CD8-positive, alpha-beta T cell (primary cell): ENCODE measurements at regions of chr5 and their contacts with region 1.

Region 1: DNA sequence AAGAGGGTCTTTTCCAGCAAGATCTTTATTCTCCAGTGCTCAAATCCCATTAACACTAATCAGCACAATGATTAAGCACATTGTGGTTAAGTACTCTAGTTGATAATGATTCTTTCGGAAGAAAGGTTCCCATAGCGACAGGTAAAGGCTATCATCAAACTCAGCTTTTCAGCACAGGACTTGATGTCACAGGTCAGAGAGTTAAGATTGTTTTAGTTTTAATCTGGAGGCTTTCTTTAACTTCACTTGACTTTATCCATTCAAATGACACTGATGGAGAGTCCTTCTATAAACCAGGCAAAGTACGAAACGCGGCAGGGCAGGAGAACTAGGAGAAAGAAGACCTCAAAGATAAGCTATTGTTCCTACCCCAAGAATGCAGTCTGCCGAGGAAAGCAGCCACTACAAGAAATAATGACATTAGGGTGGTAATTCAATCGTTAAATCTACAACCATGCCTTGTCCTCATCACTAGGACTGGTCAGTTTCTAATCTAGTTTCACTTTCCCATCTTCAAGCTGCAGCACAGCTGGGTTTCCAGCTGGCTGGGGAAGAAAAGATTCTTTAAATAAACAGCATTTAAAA is 4.6 kb downstream of the NRG2 start:
- DNase-seq: no peak
- ATAC-seq: no peak
- H3K4me3 ChIP-seq: no peak overlapping the region
- H3K4me3 Mint-ChIP-seq: peak overlapping the region; percentile 13
- H3K27ac ChIP-seq: no peak overlapping the region
- H3K27ac Mint-ChIP-seq: no peak overlapping the region
- H3K4me1 ChIP-seq: peaks cover 10% of the 10 kb centered on the region
- H3K4me1 Mint-ChIP-seq: peaks cover 16% of the 10 kb centered on the region
- H3K27me3 ChIP-seq: peaks cover 8 to 13% of the 10 kb centered on the region in 2 experiments
- H3K27me3 Mint-ChIP-seq: peaks cover 60% of the 10 kb centered on the region
- CTCF ChIP-seq: no peak

Region 2: GRCh38 chr5:138472353-138472752 is 1566.1 kb before region 1 on chr5:
- CTCF ChIA-PET with region 1: no interaction called
- POLR2A ChIA-PET with region 1: no interaction called
- intact Hi-C with region 1: loop called in 1 of 2 experiments (anchors 5 kb)
- DNase-seq: no peak
- ATAC-seq: no peak
- H3K4me3 ChIP-seq: no peak overlapping the region
- H3K4me3 Mint-ChIP-seq: no peak overlapping the region
- H3K27ac ChIP-seq: no peak overlapping the region
- H3K27ac Mint-ChIP-seq: no peak overlapping the region
- H3K4me1 ChIP-seq: peaks cover 5% of the 10 kb centered on the region
- H3K4me1 Mint-ChIP-seq: peaks cover 13% of the 10 kb centered on the region
- H3K27me3 ChIP-seq: no peaks in the 10 kb centered on the region
- H3K27me3 Mint-ChIP-seq: peaks cover 4% of the 10 kb centered on the region
- CTCF ChIP-seq: no peak